ENCODE measurements at regions of chr15 and their contacts with region 1.

Region 1: GRCh38 chr15:88083811-88084760 is 172.5 kb downstream of the NTRK3 start:
- DNase-seq: no peak
- H3K4me3 ChIP-seq: peak overlapping the region in 1 of 2 donors; percentile 22
- H3K27ac ChIP-seq: peak overlapping the region; percentile 79 to 89
- H3K4me1 ChIP-seq: peaks cover 12 to 46% of the 10 kb centered on the region in 2 donors
- H3K27me3 ChIP-seq: no peaks in the 10 kb centered on the region
- CTCF ChIP-seq: no peak

Region 2: DNA sequence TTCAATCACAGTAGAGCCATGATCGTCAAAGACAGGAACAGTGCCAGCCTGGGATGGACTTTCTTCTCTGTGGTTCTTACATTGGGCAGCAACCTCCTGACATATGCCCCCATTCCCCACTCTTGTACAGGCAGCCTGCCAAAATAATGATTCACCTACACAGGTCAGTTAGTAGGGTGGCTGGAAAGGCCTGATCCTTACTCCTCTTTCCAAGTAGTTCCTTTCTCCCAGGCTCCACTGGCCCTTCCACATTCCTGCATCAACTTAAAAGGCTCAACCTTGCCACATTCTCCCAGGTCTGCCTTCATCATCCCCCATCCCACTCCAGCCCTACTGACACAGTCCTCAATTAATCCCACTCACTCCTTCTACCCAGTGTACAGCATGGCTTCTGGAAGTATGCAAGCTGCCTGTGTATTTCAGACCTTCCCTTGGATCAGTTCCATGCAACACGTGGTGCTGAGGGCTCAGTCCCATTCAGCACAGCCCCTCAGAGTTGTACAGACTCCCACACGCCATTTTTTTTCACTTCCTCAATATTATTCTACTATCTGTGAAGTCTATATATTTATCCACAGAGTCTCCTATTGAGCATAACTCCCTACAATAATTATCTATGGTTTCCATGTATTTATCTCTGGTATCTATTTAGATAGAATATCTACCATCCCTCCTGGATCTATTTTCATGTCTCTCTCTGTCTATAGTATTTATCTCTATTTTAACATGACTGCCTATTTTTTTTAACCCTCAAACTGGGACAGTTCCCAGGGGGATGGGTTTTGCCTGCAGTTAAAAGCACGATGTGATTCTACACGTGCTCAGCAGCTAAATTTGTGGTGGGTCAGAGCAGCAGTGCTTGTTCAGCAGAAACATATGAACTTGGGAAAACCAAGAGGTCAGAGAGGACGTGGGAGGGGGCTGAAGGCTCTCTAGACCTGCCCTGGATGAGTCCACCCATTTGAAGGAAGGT is 17.1 kb before region 1 on chr15:
- intact Hi-C with region 1: no loop called
- DNase-seq: no peak
- H3K4me3 ChIP-seq: no peak overlapping the region
- H3K27ac ChIP-seq: no peak overlapping the region
- H3K4me1 ChIP-seq: peaks cover 1 to 5% of the 10 kb centered on the region in 2 donors
- H3K27me3 ChIP-seq: no peaks in the 10 kb centered on the region
- CTCF ChIP-seq: no peak

Region 3: DNA sequence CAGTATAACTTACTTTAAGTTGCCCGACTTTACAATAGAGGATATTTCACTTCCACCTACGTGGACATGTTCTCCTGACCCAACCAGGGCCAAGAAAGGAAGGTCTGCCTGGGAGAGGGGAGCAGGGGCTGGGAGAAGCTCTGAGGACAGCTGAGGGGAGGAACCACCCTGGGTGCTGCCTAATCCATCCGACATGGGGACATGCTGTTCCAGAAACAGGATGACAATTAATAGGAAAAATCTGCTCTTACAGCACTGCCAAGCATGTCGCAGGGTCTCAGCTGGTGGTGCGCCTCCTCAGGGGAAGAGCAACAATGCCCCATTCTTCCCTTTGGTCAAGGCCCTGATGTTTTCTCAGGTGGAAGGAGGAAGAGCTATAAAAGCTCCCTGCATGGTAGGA is 40.1 kb after region 1 on chr15:
- intact Hi-C with region 1: loop called (anchors 5 kb)
- DNase-seq: no peak
- H3K4me3 ChIP-seq: no peak overlapping the region
- H3K27ac ChIP-seq: no peak overlapping the region
- H3K4me1 ChIP-seq: peaks cover 5 to 25% of the 10 kb centered on the region in 2 donors
- H3K27me3 ChIP-seq: no peaks in the 10 kb centered on the region
- CTCF ChIP-seq: no peak

Region 4: DNA sequence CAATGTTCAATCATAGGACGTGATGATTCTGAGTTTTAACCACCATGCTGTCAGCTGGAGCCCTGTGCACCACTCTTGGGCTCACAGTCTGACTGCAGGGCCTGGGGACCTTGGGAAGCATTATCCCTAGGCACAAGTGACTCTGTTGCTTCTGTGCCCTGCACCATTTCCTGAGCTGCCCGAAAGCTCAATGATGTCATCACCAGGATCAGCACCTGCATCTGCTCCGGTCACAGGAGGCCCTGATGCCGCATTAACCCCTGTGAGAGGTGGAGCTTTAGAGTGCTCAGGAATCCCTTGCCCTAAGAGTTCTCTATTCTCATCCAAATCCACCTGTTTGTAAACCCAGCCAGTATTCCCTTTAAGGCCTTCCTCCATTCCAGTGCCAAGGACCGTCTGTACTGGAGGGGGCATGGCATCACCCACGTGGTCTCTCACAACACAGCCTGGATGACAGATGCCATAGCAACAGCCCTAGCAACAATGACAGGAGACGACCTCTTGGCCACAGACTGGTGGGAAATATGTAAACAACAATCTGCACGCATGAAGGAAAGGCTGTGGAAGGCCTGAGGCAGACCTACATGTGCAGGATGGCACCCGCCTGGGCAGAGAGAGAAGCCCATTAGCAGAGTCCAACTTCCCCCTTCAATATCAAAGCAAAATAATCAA is 134.6 kb after region 1 on chr15:
- intact Hi-C with region 1: no loop called
- DNase-seq: peak in 1 of 2 donors; percentile 64
- H3K4me3 ChIP-seq: no peak overlapping the region
- H3K27ac ChIP-seq: no peak overlapping the region
- H3K4me1 ChIP-seq: peaks cover 12 to 23% of the 10 kb centered on the region in 2 donors
- H3K27me3 ChIP-seq: no peaks in the 10 kb centered on the region
- CTCF ChIP-seq: no peak

Region 5: GRCh38 chr15:88312941-88313579 is 229.0 kb after region 1 on chr15:
- intact Hi-C with region 1: no loop called
- DNase-seq: no peak
- H3K4me3 ChIP-seq: no peak overlapping the region
- H3K27ac ChIP-seq: no peak overlapping the region
- H3K4me1 ChIP-seq: no peaks in the 10 kb centered on the region
- H3K27me3 ChIP-seq: no peaks in the 10 kb centered on the region
- CTCF ChIP-seq: no peak

Region 6: GRCh38 chr15:89197503-89197971 is 1113.5 kb after region 1 on chr15:
- intact Hi-C with region 1: loop called (anchors 10 kb)
- DNase-seq: no peak
- H3K4me3 ChIP-seq: no peak overlapping the region
- H3K27ac ChIP-seq: peak overlapping the region; percentile 75 to 85
- H3K4me1 ChIP-seq: peaks cover 0 to 17% of the 10 kb centered on the region in 2 donors
- H3K27me3 ChIP-seq: no peaks in the 10 kb centered on the region
- CTCF ChIP-seq: no peak

Measured in ascending aorta (tissue), 2 donors.